ENCODE measurements at regions of chr7 and their contacts with region 1.

Region 1: DNA sequence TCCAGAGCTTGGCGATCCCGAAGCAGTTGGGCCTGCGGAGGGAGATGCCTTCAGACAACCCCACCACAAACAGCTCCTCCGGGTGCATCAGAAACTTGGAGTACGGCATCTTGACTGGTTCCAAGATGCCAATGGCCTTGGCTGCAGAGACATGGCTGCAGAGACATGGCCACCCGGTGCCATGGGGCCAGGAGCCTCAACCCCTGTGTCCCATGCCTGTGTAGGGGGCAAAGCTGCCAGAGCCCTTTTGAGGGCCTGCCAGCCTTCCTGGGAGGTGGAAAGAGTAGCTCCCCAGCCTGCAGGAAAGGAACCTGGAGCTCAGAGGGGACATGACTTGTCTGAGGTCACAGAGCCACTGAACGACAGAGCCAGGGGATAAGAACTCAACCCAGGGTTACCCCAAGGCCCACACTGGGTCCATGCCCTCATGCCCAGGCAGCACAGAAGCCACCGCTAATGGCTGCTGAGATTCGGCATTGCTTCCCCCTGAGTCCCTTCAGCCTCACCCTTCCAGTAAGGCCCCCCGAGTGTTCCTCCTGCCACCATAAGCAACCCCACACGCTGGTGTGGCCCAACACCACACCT is 83.6 kb downstream of the RABGEF1 start:
- DNase-seq: no peak
- H3K4me3 ChIP-seq: no peak overlapping the region
- H3K27ac ChIP-seq: no peak overlapping the region
- H3K4me1 ChIP-seq: no peaks in the 10 kb centered on the region
- CTCF ChIP-seq: no peak

Region 2: DNA sequence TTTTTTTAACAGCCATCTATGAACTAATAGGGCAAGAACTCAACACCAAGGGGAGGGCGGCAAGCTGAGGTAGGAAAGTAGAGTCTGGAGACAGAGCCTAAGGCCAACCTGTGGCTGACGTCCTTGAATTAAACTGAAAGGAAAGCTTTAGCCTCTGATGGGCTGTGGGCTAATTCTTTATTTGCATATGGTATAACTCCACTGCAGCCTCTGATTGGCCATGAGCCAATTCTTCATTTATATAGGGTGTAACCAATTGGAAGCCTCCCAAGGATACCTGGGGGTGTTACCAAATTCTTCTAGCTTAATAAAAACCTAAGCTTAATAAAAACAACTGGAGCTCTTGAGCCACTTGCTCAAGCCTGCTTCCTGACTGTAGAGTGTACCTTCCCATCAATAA is 182.8 kb after region 1 on chr7:
- CTCF ChIA-PET with region 1: no interaction called
- POLR2A ChIA-PET with region 1: no interaction called
- intact Hi-C with region 1: loop called (anchors 10 kb)
- DNase-seq: no peak
- H3K4me3 ChIP-seq: no peak overlapping the region
- H3K27ac ChIP-seq: no peak overlapping the region
- H3K4me1 ChIP-seq: no peaks in the 10 kb centered on the region
- CTCF ChIP-seq: no peak

Measured in OCI-LY7 (cell line).